Cardiac septum (tissue), 1 donor: ENCODE measurements at regions of chr3 and their contacts with region 1.

Region 1: GRCh38 chr3:38548159-38548931 is 52.2 kb downstream of the EXOG start:
- DNase-seq: peak; percentile 80

Region 2: DNA sequence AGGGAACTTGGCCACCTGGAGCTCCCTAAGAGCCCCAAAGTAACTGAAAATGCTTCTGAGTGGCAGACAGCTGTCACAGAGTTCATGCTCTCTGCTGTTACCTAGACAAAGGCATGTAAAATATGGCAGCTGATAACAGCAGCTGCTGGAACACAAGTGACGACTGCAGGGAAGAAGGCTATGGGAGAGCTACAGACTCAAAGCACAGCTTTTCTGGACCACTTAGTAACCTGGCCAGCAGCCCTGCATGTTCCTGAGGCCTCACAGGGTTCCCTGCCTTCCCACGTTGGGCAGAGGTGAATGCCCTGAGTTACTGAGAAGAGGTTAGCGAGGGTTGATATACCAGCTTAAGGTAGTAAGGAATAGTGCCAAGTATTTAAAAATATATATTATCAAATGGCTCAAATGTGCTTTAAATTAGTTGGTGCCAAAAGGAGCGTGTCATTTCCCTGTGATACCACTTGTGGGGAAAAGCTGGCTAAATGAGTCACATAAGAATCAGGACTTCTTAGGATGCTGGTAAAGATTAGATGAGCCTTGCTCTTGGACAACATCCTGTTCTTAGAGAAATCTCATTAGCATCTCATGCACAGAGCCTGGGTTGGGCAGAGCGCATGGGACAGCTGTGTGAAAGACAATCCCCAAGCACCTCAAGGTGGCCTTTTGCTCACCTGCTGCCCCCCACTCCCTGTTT is 177.5 kb after region 1 on chr3:
- intact Hi-C with region 1: loop called (anchors 10 kb)
- DNase-seq: no peak